ENCODE measurements at regions of chr11 and their contacts with region 1.

Region 1: GRCh38 chr11:63974259-63975143 is at the start of gene COX8A:
- DNase-seq: peak; percentile 96
- ATAC-seq: peak; percentile 96
- H3K4me3 ChIP-seq: peak within 1 kb of the TSS; percentile 84 to 85
- H3K27ac ChIP-seq: peak within 1 kb of the TSS; percentile 95
- H3K4me1 ChIP-seq: peaks cover 10% of the 10 kb centered on the region
- H3K27me3 ChIP-seq: no peaks in the 10 kb centered on the region
- CTCF ChIP-seq: no peak
- total RNA-seq, gene COX8A: 613 TPM

Region 2: DNA sequence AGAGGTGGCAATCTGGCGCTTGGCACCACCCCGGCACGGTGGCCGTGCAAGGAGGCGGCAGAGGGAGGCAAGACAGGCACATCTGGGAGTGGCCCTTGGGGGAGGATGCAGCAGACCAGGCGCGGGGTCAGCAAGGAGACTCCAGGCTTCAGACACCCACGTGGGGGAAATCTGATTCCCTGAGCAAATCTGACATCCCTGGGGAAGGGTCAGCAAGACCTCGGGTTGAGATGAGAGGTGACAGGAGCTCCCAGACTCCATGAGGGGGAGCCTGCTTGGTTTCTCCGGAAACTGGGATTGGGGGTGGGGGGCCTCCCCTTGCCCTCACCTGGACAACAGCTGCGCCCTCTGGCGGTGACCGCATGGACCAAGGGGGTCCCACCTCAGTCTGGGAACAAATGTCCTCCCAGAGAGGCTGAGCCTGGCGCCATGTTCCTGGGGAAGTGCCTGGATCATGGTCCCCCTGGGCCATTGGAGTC is 53.5 kb before region 1 on chr11:
- CTCF ChIA-PET with region 1: no interaction called
- POLR2A ChIA-PET with region 1: interaction called, 15 read pairs
- in situ Hi-C with region 1: no loop called
- intact Hi-C with region 1: no loop called
- DNase-seq: no peak
- ATAC-seq: no peak
- H3K4me3 ChIP-seq: no peak overlapping the region
- H3K27ac ChIP-seq: no peak overlapping the region
- H3K4me1 ChIP-seq: peaks cover 20% of the 10 kb centered on the region
- H3K27me3 ChIP-seq: no peaks in the 10 kb centered on the region
- CTCF ChIP-seq: no peak

Region 3: DNA sequence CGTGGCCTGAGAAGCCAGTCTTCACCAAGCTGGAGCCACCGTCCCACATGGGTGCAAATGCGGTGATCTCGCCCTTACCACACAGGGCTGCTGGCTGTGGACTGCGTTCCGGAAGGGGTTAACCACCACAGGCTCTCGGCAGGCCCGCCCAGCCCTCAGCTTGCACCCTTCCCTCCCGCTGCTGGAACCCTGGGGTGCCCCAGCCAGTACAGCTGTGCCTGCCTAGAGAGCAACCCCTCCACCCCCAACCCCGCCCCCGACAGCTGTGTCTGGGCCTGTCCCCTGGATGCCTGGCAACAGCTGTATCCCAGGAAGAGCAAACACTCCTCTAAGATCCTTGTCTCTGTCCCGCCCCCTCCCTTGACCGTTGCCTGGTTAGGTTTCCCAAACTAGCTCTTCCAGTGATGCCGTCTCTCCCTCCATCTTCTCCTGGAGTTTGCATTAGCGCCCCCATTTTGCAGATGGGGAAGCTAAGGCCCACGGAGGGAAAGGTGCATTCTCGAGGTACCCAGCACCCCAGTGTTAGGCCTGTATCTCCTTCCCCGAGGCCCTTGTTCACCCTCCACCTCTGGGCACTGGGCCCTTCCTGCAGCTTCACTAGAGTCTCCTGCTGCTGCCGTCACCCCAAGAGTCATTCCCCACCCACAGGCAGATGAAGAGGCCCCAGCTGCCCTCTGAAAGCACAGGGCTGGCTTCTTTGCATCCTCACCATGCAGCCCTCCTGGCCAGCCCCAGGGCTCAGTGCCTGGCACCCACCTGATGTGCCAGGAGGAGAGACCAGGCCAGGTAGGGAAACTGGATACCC is 12.7 kb before region 1 on chr11:
- CTCF ChIA-PET with region 1: no interaction called
- POLR2A ChIA-PET with region 1: interaction called, 16 read pairs
- in situ Hi-C with region 1: no loop called
- intact Hi-C with region 1: no loop called
- DNase-seq: no peak
- ATAC-seq: peak; percentile 71
- H3K4me3 ChIP-seq: no peak overlapping the region
- H3K27ac ChIP-seq: no peak overlapping the region
- H3K4me1 ChIP-seq: peaks cover 5% of the 10 kb centered on the region; the same call in 1 of the 2 replicates
- H3K27me3 ChIP-seq: no peaks in the 10 kb centered on the region
- CTCF ChIP-seq: no peak

Measured in Panc1 (cell line).